MCF 10A (cell line): ENCODE measurements at regions of chr11 and their contacts with region 1.

Region 1: DNA sequence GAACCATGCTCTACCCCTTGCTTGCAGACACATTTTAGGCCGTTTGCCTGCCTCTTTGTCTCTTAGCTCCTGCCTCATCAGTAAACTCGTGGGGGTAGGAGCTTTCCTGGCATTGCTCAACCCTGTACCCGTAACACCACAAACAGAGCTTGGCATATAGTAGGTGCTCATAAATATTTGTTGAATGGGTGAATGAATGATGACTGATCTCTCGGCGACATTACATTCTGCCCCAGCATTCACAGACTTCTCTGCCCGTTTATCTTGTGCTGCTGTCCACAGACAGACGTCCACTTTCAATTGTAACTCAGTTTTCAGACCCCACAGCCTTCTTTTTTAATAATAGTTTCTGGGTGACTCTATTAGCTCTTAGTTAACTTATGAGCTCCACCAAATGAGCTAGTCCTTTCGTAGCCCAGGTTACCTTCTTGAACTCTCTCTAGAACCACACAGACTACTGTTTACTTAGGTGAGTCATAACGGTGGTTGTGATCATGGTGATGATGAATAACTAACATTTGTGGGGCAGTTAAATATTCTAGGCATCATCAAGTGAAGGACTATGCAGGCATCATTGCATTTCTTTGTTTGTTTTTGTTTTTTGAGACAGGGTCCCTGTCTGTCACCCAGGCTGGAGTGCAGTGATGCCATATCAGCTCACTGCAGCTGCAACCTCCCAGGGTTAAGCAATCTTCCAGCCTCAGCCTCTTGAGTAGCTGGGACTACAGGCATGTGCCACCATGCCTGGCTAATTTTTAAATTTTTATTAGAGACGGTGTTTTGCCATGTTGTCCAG is 188.5 kb downstream of the ADAMTS15 start:
- DNase-seq: peak; percentile 90
- H3K4me3 Mint-ChIP-seq: peak overlapping the region; percentile 21
- H3K27ac Mint-ChIP-seq: peak overlapping the region; percentile 78
- H3K4me1 Mint-ChIP-seq: peaks cover 45% of the 10 kb centered on the region
- H3K27me3 Mint-ChIP-seq: no peaks in the 10 kb centered on the region
- CTCF ChIP-seq: no peak

Region 2: GRCh38 chr11:130448416-130449309 is 188.3 kb before region 1 on chr11 and contains the start of gene ADAMTS15:
- CTCF ChIA-PET with region 1: no interaction called
- POLR2A ChIA-PET with region 1: no interaction called
- intact Hi-C with region 1: loop called (anchors 2 kb)
- DNase-seq: peak; percentile 89
- H3K4me3 Mint-ChIP-seq: peak within 1 kb of the TSS; percentile 72
- H3K27ac Mint-ChIP-seq: no peak within 1 kb of the TSS
- H3K4me1 Mint-ChIP-seq: no peaks in the 10 kb centered on the region
- H3K27me3 Mint-ChIP-seq: no peaks in the 10 kb centered on the region
- CTCF ChIP-seq: no peak
- total RNA-seq, gene ADAMTS15: 0.54 and 0.70 TPM in 2 replicates

Region 3: GRCh38 chr11:130653838-130654636 is 17.1 kb after region 1 on chr11:
- CTCF ChIA-PET with region 1: interaction called, 3 read pairs
- POLR2A ChIA-PET with region 1: interaction called, 24 read pairs
- intact Hi-C with region 1: no loop called
- DNase-seq: peak; percentile 45
- H3K4me3 Mint-ChIP-seq: no peak overlapping the region
- H3K27ac Mint-ChIP-seq: peak overlapping the region; percentile 78
- H3K4me1 Mint-ChIP-seq: peaks cover 26% of the 10 kb centered on the region
- H3K27me3 Mint-ChIP-seq: no peaks in the 10 kb centered on the region
- CTCF ChIP-seq: no peak

Region 4: GRCh38 chr11:130775306-130776058 is 138.6 kb after region 1 on chr11:
- CTCF ChIA-PET with region 1: no interaction called
- POLR2A ChIA-PET with region 1: no interaction called
- intact Hi-C with region 1: loop called (anchors 2 kb)
- DNase-seq: peak; percentile 86
- H3K4me3 Mint-ChIP-seq: no peak overlapping the region
- H3K27ac Mint-ChIP-seq: peak overlapping the region; percentile 18
- H3K4me1 Mint-ChIP-seq: peaks cover 34% of the 10 kb centered on the region
- H3K27me3 Mint-ChIP-seq: no peaks in the 10 kb centered on the region
- CTCF ChIP-seq: no peak